Activated B cell treated with CpG ODN at 0.5 μM for 24 hours (primary cell): ENCODE measurements at regions of chrX and their contacts with region 1.

Region 1: GRCh38 chrX:53433651-53434639 is at the start of gene HSD17B10:
- DNase-seq: peak; percentile 75
- ATAC-seq: peak; percentile 98
- H3K4me3 Mint-ChIP-seq: peak within 1 kb of the TSS; percentile 93
- H3K27ac Mint-ChIP-seq: peak within 1 kb of the TSS; percentile 90
- H3K4me1 Mint-ChIP-seq: peaks cover 12% of the 10 kb centered on the region
- H3K27me3 Mint-ChIP-seq: peaks cover 6% of the 10 kb centered on the region
- CTCF ChIP-seq: no peak
- total RNA-seq, gene HSD17B10: 108 and 114 TPM in 2 replicates

Region 2: DNA sequence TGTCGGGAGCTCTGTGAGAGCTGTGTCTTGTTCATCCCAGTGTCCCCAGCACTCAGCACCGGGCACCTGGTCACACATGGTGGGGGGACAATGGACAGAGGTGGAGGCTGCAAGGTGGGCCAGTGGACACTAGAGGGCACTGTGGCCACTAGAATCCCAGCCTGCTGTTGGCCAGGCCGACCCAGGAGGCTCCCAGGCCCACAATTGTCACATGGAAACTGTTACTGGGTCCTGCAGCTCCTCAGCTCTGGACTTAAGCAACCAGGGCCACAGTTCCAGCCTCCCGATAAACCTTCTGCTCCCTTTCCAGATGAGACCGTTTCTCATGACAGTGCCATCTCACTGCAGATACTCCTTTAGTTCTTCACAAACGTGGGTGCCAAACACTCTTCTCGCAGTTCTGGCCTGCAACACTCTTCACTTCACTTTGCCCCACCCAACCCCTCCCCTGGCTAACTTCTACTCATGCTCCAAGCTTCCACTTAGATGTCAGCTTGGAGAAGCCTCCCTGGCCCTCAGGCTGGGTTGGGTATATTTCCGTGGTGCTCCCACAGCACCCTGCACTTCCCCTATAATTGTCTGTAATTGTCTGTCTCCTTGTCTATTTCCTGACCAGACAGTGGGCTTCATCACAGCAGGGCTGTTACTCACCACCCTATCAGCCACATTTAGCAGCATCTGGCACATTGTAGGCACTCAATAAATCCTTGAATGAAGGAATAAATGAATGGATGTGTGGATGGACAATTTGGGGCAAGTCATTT is 149.1 kb before region 1 on chrX:
- CTCF ChIA-PET with region 1: no interaction called
- POLR2A ChIA-PET with region 1: no interaction called
- intact Hi-C with region 1: loop called (anchors 1 kb)
- DNase-seq: peak; percentile 25
- ATAC-seq: peak; percentile 64
- H3K4me3 Mint-ChIP-seq: no peak overlapping the region
- H3K27ac Mint-ChIP-seq: no peak overlapping the region
- H3K4me1 Mint-ChIP-seq: peaks cover 23% of the 10 kb centered on the region
- H3K27me3 Mint-ChIP-seq: peaks cover 2% of the 10 kb centered on the region
- CTCF ChIP-seq: no peak

Region 3: GRCh38 chrX:53422086-53422860 is 11.7 kb before region 1 on chrX and contains the start of gene SMC1A:
- CTCF ChIA-PET with region 1: no interaction called
- POLR2A ChIA-PET with region 1: interaction called, 14 read pairs
- intact Hi-C with region 1: loop called (anchors 1 kb)
- DNase-seq: peak; percentile 79
- ATAC-seq: peak; percentile 89
- H3K4me3 Mint-ChIP-seq: peak within 1 kb of the TSS; percentile 92
- H3K27ac Mint-ChIP-seq: peak within 1 kb of the TSS; percentile 96
- H3K4me1 Mint-ChIP-seq: peaks cover 29% of the 10 kb centered on the region
- H3K27me3 Mint-ChIP-seq: no peaks in the 10 kb centered on the region
- CTCF ChIP-seq: no peak
- total RNA-seq, gene SMC1A: 75.8 and 84.0 TPM in 2 replicates

Region 4: DNA sequence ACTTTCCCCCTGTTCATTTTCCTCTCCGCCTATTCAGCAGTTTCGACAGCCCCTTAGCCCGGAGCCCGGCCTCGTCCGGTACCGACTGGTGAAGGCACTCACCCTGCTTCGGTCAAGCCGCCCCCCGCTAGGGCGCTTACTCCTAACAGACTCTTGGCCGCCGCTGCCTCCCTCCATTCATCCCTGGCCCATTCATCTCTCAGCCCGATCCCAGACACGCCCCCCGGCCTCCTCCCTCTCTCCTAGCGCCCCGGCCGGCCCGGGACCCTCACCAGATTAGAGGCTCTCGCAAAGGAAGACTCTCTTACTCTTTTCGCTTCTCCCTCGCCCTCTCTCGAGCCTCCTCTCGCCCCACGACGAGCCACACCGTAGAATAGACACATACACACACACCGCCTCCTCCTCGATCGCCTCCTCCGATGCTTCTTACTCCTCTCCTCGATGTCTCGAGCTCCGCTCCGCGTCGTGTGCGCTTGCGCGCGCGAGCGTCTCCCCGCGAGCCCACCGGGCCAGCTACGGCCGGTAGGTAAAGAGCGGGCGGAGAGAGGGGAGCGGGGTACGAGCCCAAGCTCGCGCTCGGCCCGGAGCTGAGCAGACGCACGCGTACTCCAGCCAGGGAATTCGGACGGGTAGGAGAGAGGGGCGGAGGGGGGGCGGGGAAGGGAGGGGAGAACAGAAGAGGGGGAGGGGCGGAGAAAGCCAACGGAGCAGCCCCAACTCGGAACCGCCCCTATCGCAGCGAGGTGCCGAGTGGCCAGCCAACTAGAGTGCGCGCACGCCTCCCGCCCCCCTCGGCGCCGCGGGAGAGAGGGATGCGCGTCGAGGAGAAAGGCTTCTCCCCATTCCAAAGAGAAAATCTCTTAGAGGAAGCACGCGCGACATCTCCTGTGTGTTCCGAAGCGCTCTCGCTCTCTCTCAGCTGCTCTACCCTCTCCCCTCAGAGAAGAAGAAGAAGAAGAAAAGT is 923.8 kb after region 1 on chrX and contains the start of gene WNK3:
- CTCF ChIA-PET with region 1: no interaction called
- POLR2A ChIA-PET with region 1: no interaction called
- intact Hi-C with region 1: loop called (anchors 5 kb)
- DNase-seq: peak; percentile 22
- ATAC-seq: peak; percentile 61
- H3K4me3 Mint-ChIP-seq: peak within 1 kb of the TSS; percentile 85
- H3K27ac Mint-ChIP-seq: peak within 1 kb of the TSS; percentile 59
- H3K4me1 Mint-ChIP-seq: peaks cover 20% of the 10 kb centered on the region
- H3K27me3 Mint-ChIP-seq: peaks cover 10% of the 10 kb centered on the region
- CTCF ChIP-seq: no peak
- total RNA-seq, gene WNK3: 0.40 and 0.46 TPM in 2 replicates

Region 5: GRCh38 chrX:54978451-54978850 is 1544.5 kb after region 1 on chrX:
- CTCF ChIA-PET with region 1: no interaction called
- POLR2A ChIA-PET with region 1: no interaction called
- intact Hi-C with region 1: no loop called
- DNase-seq: no peak
- ATAC-seq: no peak
- H3K4me3 Mint-ChIP-seq: no peak overlapping the region
- H3K27ac Mint-ChIP-seq: no peak overlapping the region
- H3K4me1 Mint-ChIP-seq: no peaks in the 10 kb centered on the region
- H3K27me3 Mint-ChIP-seq: no peaks in the 10 kb centered on the region
- CTCF ChIP-seq: no peak